A673 (cell line): ENCODE measurements at regions of chr1 and their contacts with region 1.

Region 1: GRCh38 chr1:19704247-19705113 is 39.8 kb downstream of the HTR6 start:
- DNase-seq: peak; percentile 73
- H3K4me3 ChIP-seq: no peak overlapping the region
- H3K27ac ChIP-seq: no peak overlapping the region
- H3K4me1 ChIP-seq: no peaks in the 10 kb centered on the region
- H3K27me3 ChIP-seq: no peaks in the 10 kb centered on the region
- CTCF ChIP-seq: peak; percentile 90

Region 2: DNA sequence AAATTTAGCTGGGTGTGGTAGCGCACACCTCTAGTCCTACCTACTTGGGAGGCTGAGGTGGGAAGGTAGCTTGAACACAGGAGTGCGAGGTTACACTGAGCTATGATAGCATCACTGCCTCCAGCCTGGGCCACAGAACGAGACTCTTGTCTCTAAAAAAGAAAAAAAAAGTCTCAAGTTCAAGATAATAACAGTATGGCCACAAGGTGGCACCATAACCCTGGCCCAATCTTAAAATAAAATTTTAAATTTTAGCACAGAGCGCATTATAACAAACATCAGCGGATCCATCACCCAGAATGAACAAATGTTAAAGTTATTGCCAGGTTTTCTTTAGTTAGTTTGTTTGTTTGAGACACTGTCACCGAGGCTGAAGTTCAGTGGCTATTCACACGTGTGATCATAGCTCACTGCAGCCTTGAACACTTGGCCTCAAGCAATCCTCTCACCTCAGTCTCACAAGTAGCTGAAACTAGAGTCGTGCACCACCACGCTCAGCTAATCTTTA is 42.7 kb before region 1 on chr1:
- CTCF ChIA-PET with region 1: interaction called, 18 read pairs
- POLR2A ChIA-PET with region 1: no interaction called
- intact Hi-C with region 1: loop called (anchors 5 kb)
- DNase-seq: peak; percentile 62
- H3K4me3 ChIP-seq: no peak overlapping the region
- H3K27ac ChIP-seq: no peak overlapping the region
- H3K4me1 ChIP-seq: no peaks in the 10 kb centered on the region
- H3K27me3 ChIP-seq: peaks cover 33% of the 10 kb centered on the region
- CTCF ChIP-seq: peak; percentile 75